ENCODE measurements at regions of chr12 and their contacts with region 1.

Region 1: GRCh38 chr12:92859650-92860386 is 69.3 kb downstream of the EEA1 start:
- DNase-seq: no peak
- H3K4me3 ChIP-seq: no peak overlapping the region
- H3K27ac ChIP-seq: no peak overlapping the region
- H3K4me1 ChIP-seq: no peaks in the 10 kb centered on the region
- H3K27me3 ChIP-seq: no peaks in the 10 kb centered on the region
- CTCF ChIP-seq: no peak
- POLR2A ChIP-seq: no peak

Region 2: GRCh38 chr12:92844151-92844763 is 15.6 kb before region 1 on chr12:
- CTCF ChIA-PET with region 1: interaction called, 12 read pairs
- POLR2A ChIA-PET with region 1: no interaction called
- dilution Hi-C with region 1: no loop called
- intact Hi-C with region 1: no loop called
- DNase-seq: no peak
- H3K4me3 ChIP-seq: no peak overlapping the region
- H3K27ac ChIP-seq: no peak overlapping the region
- H3K4me1 ChIP-seq: no peaks in the 10 kb centered on the region
- H3K27me3 ChIP-seq: no peaks in the 10 kb centered on the region
- CTCF ChIP-seq: no peak
- POLR2A ChIP-seq: no peak

Measured in endothelial cell of umbilical vein (primary cell).